PC-9 (cell line): ENCODE measurements at regions of chr19 and their contacts with region 1.

Region 1: GRCh38 chr19:34220472-34221063 is 33.8 kb upstream of the GARRE1 start:
- DNase-seq: peak in 1 of 2 experiments; percentile 40
- H3K4me3 ChIP-seq: no peak overlapping the region
- H3K27ac ChIP-seq: no peak overlapping the region
- H3K4me1 ChIP-seq: peaks cover 24% of the 10 kb centered on the region
- H3K27me3 ChIP-seq: no peaks in the 10 kb centered on the region
- CTCF ChIP-seq: peak; percentile 85

Region 2: GRCh38 chr19:34041925-34042521 is 178.5 kb before region 1 on chr19:
- CTCF ChIA-PET with region 1: interaction called, 12 read pairs
- POLR2A ChIA-PET with region 1: no interaction called
- intact Hi-C with region 1: no loop called
- DNase-seq: peak in 1 of 2 experiments; percentile 18
- H3K4me3 ChIP-seq: no peak overlapping the region
- H3K27ac ChIP-seq: no peak overlapping the region
- H3K4me1 ChIP-seq: no peaks in the 10 kb centered on the region
- H3K27me3 ChIP-seq: peaks cover 21% of the 10 kb centered on the region
- CTCF ChIP-seq: peak; percentile 73

Region 3: GRCh38 chr19:34171877-34172660 is 48.5 kb before region 1 on chr19 and contains the start of gene LSM14A:
- CTCF ChIA-PET with region 1: no interaction called
- POLR2A ChIA-PET with region 1: no interaction called
- intact Hi-C with region 1: loop called (anchors 2 kb)
- DNase-seq: peak; percentile 67 to 91
- H3K4me3 ChIP-seq: peak within 1 kb of the TSS; percentile 71
- H3K27ac ChIP-seq: peak within 1 kb of the TSS; percentile 90
- H3K4me1 ChIP-seq: peaks cover 45% of the 10 kb centered on the region
- H3K27me3 ChIP-seq: no peaks in the 10 kb centered on the region
- CTCF ChIP-seq: no peak
- total RNA-seq, gene LSM14A: 114 and 169 TPM in 2 replicates

Region 4: GRCh38 chr19:34288381-34288780 is 67.8 kb after region 1 on chr19:
- CTCF ChIA-PET with region 1: no interaction called
- POLR2A ChIA-PET with region 1: interaction called, 20 read pairs
- intact Hi-C with region 1: no loop called
- DNase-seq: no peak
- H3K4me3 ChIP-seq: no peak overlapping the region
- H3K27ac ChIP-seq: no peak overlapping the region
- H3K4me1 ChIP-seq: no peaks in the 10 kb centered on the region
- H3K27me3 ChIP-seq: no peaks in the 10 kb centered on the region
- CTCF ChIP-seq: no peak